B cell (primary cell): ENCODE measurements at regions of chr20 and their contacts with region 1.

Region 1: DNA sequence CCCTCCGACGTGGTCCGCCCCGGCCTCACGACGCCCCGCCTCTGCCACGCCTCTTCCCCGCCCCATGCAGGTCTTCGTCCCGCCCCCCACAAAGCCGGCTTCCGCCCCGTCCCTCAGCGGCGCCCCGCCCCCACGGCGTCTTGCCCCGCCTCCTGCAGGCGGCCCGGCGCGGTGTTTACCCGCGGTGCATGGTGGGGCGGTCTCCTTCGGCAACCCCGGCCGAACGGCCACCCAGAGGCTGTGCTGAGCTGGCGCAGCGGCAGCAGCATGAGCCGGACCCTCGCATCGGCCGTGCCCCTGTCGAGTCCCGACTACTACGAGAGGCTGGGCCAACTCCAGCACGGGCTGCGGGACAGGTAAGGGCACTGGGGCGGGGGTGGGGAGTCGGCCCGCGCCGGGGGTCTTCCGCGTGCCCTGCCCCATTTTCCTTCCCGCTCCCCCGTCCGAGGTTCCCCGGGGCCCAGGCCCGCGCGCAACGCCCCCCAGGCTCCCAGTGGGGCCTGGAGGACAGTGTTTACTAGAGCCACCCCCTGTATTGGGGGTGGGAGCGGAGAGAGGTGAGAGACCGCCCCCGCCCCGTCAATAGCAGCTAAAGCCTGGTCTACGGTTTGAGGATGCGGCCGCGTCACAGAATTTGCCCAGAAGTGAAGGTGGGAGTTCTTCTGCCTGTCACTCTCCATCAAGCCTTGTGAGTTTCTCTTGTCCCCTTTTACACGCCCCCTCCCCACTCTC is at the start of gene KIZ:
- DNase-seq: peak; percentile 97
- ATAC-seq: peak; percentile 96
- H3K4me3 ChIP-seq: peak within 1 kb of the TSS; percentile 50 to 90 (median 76)
- H3K4me3 Mint-ChIP-seq: peak within 1 kb of the TSS; percentile 91
- H3K27ac ChIP-seq: peak within 1 kb of the TSS; percentile 63 to 79
- H3K27ac Mint-ChIP-seq: peak within 1 kb of the TSS; percentile 88
- H3K4me1 ChIP-seq: peaks cover 14 to 16% of the 10 kb centered on the region in 2 donors
- H3K4me1 Mint-ChIP-seq: peaks cover 21% of the 10 kb centered on the region
- H3K27me3 ChIP-seq: no peaks in the 10 kb centered on the region
- H3K27me3 Mint-ChIP-seq: peaks cover 4% of the 10 kb centered on the region
- CTCF ChIP-seq: peak; percentile 53
- total RNA-seq, gene KIZ: 36.3 and 40.4 TPM in 2 replicates

Region 2: DNA sequence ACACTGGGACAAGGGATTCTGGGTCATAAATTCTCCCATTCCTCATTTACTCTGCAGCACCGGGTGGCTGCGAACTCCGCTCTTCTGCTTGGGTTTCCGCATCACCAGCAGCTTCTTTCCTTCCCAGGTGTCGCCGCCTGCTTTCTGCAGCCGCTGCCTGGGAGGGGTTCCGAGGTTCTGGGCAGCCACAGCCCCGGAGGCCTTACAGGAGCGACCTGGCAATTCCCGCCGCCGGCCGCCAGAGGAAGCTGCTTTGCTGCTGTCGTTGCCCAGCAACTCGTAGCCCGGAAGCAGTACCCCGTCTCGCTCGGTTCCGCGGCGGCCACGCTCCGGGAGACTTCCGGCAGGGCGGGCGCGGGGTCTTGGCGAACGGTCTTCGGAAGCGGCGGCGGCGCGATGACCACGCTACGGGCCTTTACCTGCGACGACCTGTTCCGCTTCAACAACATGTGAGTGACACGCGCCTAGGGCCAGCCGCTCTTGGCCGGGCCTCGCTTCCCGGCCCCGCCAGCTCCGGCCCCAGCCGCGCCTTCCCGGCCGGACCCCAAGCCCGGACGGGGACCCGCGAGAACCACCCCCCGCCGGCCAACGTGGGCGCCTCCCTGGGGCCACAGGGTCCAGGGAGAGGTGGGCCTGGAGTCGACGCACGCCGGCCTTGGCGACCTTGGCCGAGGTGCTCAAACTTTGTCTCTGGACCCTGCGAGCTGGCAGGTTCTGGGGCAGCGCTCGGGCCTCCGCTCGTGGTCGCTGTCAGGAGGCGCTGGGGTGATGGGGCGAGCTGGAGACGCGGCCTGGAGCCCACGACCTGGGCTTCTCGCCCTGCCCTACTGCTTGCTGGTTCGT is 1108.8 kb before region 1 on chr20 and contains the start of gene NAA20:
- CTCF ChIA-PET with region 1: no interaction called
- POLR2A ChIA-PET with region 1: no interaction called
- intact Hi-C with region 1: loop called (anchors 5 kb)
- DNase-seq: peak; percentile 91
- ATAC-seq: peak; percentile 98
- H3K4me3 ChIP-seq: peak within 1 kb of the TSS; percentile 41 to 91 (median 83)
- H3K4me3 Mint-ChIP-seq: peak within 1 kb of the TSS; percentile 94
- H3K27ac ChIP-seq: peak within 1 kb of the TSS; percentile 1 to 86
- H3K27ac Mint-ChIP-seq: peak within 1 kb of the TSS; percentile 94
- H3K4me1 ChIP-seq: peaks cover 12 to 27% of the 10 kb centered on the region in 2 donors
- H3K4me1 Mint-ChIP-seq: peaks cover 42% of the 10 kb centered on the region
- H3K27me3 ChIP-seq: no peaks in the 10 kb centered on the region
- H3K27me3 Mint-ChIP-seq: no peaks in the 10 kb centered on the region
- CTCF ChIP-seq: peak; percentile 73
- total RNA-seq, gene NAA20: 25.5 and 27.1 TPM in 2 replicates

Region 3: DNA sequence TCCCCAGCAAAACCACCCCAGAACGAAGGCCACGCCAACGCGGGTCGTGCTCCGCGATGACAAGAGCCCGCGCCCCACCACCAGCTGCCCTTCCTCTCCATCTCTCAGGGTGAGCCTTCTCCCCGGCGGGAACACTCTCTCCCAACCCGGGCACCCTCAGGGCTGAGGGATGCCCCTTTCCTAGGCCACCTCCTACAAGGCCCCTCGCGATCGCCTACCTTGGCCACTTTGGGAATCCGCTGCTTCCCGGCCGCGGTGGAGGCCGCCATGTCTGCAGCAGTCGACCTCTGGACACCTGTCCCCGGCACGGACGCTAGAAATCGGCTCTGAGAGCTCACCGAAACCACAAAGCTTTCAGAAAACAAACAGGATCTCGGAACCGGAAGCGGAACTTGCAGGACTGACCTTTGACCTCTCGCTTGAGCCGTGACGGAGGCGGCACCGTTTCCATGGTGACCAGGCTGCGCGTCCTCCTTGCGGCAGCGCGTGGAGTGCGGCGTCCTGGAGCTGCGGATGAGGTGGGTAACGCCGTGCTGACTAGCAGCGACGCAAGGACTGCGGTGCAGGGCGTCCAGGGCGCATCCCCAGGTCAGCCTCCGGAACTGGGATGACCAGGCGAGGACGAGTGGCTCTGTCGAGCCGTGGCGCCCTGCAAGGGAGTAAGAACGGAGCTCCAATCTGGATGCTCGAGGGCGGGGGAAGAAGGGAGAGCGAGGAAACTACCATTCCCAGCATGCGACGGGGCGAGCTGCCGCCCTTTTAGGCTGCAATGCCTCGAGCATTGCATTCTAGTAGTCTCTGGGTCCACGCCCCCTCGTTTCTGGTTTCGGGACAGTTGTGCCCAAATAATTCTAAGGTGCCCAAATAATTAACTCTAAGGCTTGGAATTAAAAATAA is 1073.7 kb before region 1 on chr20 and contains the starts of genes CFAP61 and CRNKL1:
- CTCF ChIA-PET with region 1: no interaction called
- POLR2A ChIA-PET with region 1: no interaction called
- intact Hi-C with region 1: loop called (anchors 2 kb)
- DNase-seq: peak; percentile 99
- ATAC-seq: peak; percentile 93
- H3K4me3 ChIP-seq: peak within 1 kb of the TSS; percentile 85 to 98 (median 97)
- H3K4me3 Mint-ChIP-seq: peak within 1 kb of the TSS; percentile 99
- H3K27ac ChIP-seq: peak within 1 kb of the TSS; percentile 78 to 91
- H3K27ac Mint-ChIP-seq: peak within 1 kb of the TSS; percentile 97
- H3K4me1 ChIP-seq: peaks cover 7 to 14% of the 10 kb centered on the region in 2 donors
- H3K4me1 Mint-ChIP-seq: peaks cover 23% of the 10 kb centered on the region
- H3K27me3 ChIP-seq: peaks cover 0 to 9% (median 5%) of the 10 kb centered on the region in 4 experiments
- H3K27me3 Mint-ChIP-seq: peaks cover 7% of the 10 kb centered on the region
- CTCF ChIP-seq: no peak
- total RNA-seq, gene CFAP61: not detected in 2 replicates
- total RNA-seq, gene CRNKL1: 25.5 and 32.1 TPM in 2 replicates

Region 4: GRCh38 chr20:21099751-21100577 is 26.1 kb before region 1 on chr20:
- CTCF ChIA-PET with region 1: interaction called, 3 read pairs
- POLR2A ChIA-PET with region 1: no interaction called
- intact Hi-C with region 1: loop called (anchors 1 kb)
- DNase-seq: peak; percentile 65
- ATAC-seq: peak; percentile 50
- H3K4me3 ChIP-seq: peak overlapping the region; percentile 62 to 77 (median 71)
- H3K4me3 Mint-ChIP-seq: peak overlapping the region; percentile 95
- H3K27ac ChIP-seq: peak overlapping the region in 1 of 2 donors; percentile 16
- H3K27ac Mint-ChIP-seq: peak overlapping the region; percentile 88
- H3K4me1 ChIP-seq: peaks cover 45 to 51% of the 10 kb centered on the region in 2 donors
- H3K4me1 Mint-ChIP-seq: peaks cover 30% of the 10 kb centered on the region
- H3K27me3 ChIP-seq: peaks cover 1 to 85% (median 64%) of the 10 kb centered on the region in 4 experiments
- H3K27me3 Mint-ChIP-seq: peaks cover 74% of the 10 kb centered on the region
- CTCF ChIP-seq: no peak